Panc1 (cell line): ENCODE measurements at regions of chrX and their contacts with region 1.

Region 1: DNA sequence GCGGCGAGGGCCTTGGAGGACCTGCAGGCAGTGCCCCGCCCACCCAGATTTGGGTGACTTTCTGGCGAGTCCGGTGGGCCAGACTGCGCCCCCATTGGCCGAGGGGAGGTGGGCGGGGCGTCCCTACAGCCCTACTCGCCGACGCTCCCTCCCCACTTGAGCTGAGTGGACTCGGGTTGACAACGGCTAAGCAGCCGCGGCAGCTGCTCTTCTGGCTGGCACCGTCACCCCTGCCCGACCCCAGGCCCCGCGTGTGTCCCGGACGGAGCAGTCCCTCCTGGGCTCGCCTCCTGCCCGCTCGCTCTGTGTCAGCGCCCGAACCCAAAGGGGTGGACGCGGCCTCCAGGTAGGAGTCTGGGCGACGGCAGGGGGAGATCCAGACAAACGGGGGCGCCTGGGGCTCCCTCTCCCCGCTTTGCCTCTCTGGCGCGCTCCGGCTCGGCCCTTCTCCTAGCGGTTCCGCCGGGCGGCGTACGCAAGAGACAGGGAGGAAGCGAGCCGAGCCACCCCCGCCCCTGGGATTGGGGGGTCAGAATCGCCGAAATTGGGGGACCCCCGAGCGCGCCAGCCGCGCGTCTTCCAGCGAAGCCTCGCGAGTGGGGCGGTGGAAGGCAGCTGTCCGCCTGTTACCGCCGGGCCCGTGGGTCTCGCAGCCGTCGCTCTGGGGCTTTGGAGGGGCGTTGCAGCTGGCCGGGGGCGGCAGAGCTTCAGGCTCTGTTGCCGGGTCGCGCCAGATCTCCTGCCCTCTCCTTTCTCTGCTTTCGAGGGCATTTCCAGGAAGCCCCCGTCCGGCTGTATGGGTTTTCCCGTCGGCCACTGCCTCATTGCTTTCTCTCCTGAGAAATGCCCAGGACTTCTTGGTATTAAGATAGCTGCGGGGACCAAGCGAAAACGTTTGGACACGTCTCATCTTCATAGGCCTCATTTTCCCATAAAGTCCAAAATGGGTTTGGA is 46.3 kb downstream of the STARD8 start:
- DNase-seq: no peak
- ATAC-seq: peak; percentile 80
- H3K4me3 ChIP-seq: peak overlapping the region; percentile 50 to 52
- H3K27ac ChIP-seq: no peak overlapping the region
- H3K4me1 ChIP-seq: peaks cover 4% of the 10 kb centered on the region
- H3K27me3 ChIP-seq: no peaks in the 10 kb centered on the region
- CTCF ChIP-seq: no peak

Region 2: DNA sequence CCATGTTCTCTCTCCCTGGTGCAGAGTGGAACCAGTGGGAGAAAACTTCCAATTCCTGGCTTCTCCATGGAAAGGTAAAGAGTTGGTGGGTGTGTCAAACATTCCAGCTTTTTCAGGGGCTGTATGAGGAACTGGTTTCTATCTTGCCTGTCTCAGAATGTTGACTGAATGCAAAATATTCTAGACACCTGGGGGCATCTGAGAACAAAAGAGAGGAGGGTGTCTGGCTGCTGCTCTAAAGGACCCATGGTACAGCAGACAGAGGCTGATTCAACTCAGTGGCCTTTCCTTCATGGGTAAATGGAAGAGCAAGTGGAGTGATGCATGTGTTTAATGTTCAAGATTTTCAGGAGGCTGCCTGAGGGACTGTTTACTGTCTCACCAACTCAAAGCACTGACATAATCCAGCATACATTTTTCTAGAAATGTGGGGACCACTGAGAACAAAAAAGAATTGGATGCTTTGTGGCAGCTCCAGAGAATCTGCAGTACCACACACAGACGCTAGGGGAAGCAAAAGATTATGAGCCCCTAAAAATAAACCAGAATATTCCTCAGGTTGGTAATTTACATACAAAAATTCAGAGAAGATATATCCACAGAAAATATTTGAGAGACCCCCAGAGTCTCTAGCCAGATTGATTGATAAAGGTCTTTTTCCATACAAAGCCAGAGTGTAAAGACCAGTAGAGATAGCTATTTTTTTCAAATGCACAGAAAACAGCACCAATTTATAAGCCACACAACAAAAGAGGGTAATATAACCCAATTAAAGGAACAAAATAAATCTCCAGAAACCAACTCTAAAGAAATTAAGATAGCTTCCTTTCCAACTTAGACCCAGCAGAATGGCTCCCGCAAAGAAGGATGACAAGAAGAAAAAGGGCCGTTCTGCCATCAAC is 94.3 kb before region 1 on chrX:
- CTCF ChIA-PET with region 1: no interaction called
- POLR2A ChIA-PET with region 1: no interaction called
- in situ Hi-C with region 1: no loop called
- intact Hi-C with region 1: loop called (anchors 10 kb)
- DNase-seq: no peak
- ATAC-seq: no peak
- H3K4me3 ChIP-seq: no peak overlapping the region
- H3K27ac ChIP-seq: no peak overlapping the region
- H3K4me1 ChIP-seq: no peaks in the 10 kb centered on the region
- H3K27me3 ChIP-seq: no peaks in the 10 kb centered on the region
- CTCF ChIP-seq: peak; percentile 76